ENCODE measurements at regions of chr1 and their contacts with region 1.

Region 1: DNA sequence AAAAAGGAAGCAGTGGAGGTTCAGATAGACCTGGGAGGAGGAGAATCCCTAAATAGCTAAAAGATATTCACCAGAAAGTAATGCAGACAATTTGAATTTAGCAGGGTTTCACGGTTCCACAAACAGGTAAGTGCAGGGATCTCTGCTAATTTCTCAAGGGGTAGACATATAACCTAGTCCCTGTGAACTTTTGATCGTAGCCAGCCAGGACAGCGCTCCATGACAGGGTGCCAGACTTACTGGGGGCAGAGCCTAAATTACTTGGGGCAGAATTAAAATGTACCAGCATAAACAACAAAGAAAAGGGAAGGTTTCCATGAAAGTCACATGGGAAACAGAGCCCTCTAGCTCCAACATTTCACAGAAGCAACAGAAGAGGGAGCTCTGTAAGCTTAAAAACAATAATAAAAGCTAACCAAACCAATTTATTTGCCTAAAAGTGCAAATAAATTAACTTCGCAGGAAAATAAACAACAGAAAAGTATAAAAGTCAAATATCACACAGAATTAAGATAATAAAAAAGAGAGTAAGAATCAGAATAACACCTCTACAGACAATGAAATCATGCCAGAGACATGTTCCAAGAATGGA is 198.3 kb downstream of the DUSP10 start:
- DNase-seq: no peak
- H3K4me3 Mint-ChIP-seq: no peak overlapping the region
- H3K27ac Mint-ChIP-seq: no peak overlapping the region
- H3K4me1 Mint-ChIP-seq: peaks cover 2% of the 10 kb centered on the region
- H3K27me3 Mint-ChIP-seq: peaks cover 18% of the 10 kb centered on the region

Region 2: GRCh38 chr1:221527886-221528624 is 15.6 kb before region 1 on chr1:
- intact Hi-C with region 1: no loop called
- DNase-seq: no peak
- H3K4me3 Mint-ChIP-seq: no peak overlapping the region
- H3K27ac Mint-ChIP-seq: no peak overlapping the region
- H3K4me1 Mint-ChIP-seq: no peaks in the 10 kb centered on the region
- H3K27me3 Mint-ChIP-seq: peaks cover 15% of the 10 kb centered on the region

Region 3: GRCh38 chr1:221602866-221603265 is 59.2 kb after region 1 on chr1:
- intact Hi-C with region 1: no loop called
- DNase-seq: no peak
- H3K4me3 Mint-ChIP-seq: no peak overlapping the region
- H3K27ac Mint-ChIP-seq: no peak overlapping the region
- H3K4me1 Mint-ChIP-seq: no peaks in the 10 kb centered on the region
- H3K27me3 Mint-ChIP-seq: peaks cover 6% of the 10 kb centered on the region

Region 4: DNA sequence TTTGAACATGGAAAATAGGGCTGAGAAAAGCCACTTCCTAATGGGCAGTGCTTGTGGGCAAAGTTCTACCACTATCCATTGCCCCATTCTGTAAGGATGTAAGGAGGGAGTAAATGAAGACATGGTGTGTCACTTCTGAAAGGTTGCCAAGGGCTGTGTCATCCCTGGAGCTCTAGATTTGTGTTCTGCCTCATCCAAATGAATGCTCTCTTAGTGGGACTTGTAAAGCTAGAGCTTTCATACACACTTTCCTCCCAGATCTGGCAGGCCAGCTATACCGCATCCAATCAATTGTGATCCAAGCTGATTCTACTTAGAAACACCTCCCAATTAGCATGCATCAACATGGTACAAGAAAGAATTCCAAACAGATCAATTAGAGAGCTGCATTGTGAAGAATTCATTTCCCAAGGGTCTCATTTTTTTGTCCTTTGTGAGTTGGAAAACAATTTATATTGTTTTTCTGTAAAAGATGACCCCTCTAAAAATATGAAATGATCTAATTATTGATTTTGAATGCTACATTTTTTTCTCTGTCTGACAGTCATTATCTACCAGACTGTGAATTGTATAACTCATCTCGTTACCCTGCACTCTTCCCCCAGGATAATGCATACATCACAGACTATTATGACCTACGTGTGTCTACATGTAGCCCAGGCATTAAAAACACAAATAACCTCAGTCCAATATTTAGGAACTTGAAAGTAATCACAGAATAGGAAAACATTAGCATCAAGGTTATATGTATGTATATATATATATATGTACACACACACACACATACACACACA is 315.4 kb after region 1 on chr1:
- intact Hi-C with region 1: loop called (anchors 10 kb)
- DNase-seq: no peak
- H3K4me3 Mint-ChIP-seq: no peak overlapping the region
- H3K27ac Mint-ChIP-seq: no peak overlapping the region
- H3K4me1 Mint-ChIP-seq: peaks cover 6% of the 10 kb centered on the region
- H3K27me3 Mint-ChIP-seq: peaks cover 9% of the 10 kb centered on the region